ENCODE measurements at regions of chr1 and their contacts with region 1.

Region 1: DNA sequence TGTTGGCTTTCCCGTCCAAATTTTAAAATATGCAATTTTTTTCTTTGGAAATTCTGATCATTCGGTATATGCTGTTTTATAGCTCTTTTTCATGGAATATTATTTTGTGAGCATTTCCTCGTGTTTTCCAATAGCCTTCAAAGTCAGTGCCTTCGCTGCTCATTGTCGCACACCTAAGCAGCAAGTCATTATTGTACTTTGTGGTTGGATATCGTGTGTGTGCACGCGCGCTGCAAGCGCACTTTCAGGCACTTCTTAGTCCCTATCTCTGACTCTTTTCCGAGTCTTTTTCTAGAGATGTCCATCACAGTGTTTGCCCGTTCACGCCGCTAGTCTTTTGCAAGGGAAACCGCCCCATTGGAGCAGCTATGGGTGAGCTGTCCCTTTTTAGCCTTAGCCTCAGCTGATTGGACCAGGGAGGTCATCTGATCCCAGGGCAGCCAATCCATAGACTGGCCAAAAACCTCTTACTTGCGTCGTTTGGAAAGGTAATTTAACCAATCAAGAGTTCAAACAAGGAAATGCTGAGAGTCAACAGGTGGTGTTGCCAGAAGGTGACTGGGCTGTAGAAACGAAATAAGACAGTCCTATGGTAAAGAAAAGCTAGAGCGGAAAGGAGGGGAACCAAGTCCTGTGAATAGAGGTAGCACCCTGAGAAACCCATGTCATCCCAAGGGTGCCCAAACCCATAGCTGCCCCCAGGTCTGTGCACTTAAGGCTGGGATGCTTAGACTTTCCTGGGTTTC is 708 bp upstream of the HYI start:
- DNase-seq: peak; percentile 88 to 94
- H3K4me3 ChIP-seq: peak overlapping the region; percentile 59
- H3K4me3 Mint-ChIP-seq: peak overlapping the region; percentile 93
- H3K27ac Mint-ChIP-seq: peak overlapping the region; percentile 88
- H3K4me1 ChIP-seq: peaks cover 11% of the 10 kb centered on the region
- H3K4me1 Mint-ChIP-seq: peaks cover 9% of the 10 kb centered on the region
- H3K27me3 ChIP-seq: no peaks in the 10 kb centered on the region
- H3K27me3 Mint-ChIP-seq: no peaks in the 10 kb centered on the region
- CTCF ChIP-seq: no peak

Region 2: GRCh38 chr1:43402089-43402865 is 52.2 kb before region 1 on chr1:
- CTCF ChIA-PET with region 1: no interaction called
- POLR2A ChIA-PET with region 1: no interaction called
- intact Hi-C with region 1: no loop called
- DNase-seq: no peak
- H3K4me3 ChIP-seq: no peak overlapping the region
- H3K4me3 Mint-ChIP-seq: no peak overlapping the region
- H3K27ac Mint-ChIP-seq: no peak overlapping the region
- H3K4me1 ChIP-seq: no peaks in the 10 kb centered on the region
- H3K4me1 Mint-ChIP-seq: no peaks in the 10 kb centered on the region
- H3K27me3 ChIP-seq: no peaks in the 10 kb centered on the region
- H3K27me3 Mint-ChIP-seq: no peaks in the 10 kb centered on the region
- CTCF ChIP-seq: no peak

Region 3: DNA sequence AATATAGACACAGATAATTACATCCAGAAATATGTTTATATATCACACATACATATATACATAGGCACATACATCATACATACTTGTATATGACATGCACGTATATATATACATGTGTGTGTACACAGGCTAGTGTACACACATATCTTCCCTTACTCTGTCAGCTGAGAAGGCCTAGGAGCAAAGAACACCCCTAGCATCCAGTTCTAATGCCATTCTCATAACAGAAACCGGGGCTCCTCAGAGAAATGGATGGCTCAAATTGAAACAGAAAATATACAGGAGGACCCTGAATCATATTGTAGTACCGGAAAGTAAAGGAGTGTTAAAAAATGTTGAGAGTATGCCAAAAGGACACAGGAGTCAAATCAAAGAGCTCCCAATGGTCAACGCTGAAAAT is 19.0 kb after region 1 on chr1:
- CTCF ChIA-PET with region 1: no interaction called
- POLR2A ChIA-PET with region 1: no interaction called
- intact Hi-C with region 1: loop called (anchors 1 kb)
- DNase-seq: no peak
- H3K4me3 ChIP-seq: no peak overlapping the region
- H3K4me3 Mint-ChIP-seq: no peak overlapping the region
- H3K27ac Mint-ChIP-seq: no peak overlapping the region
- H3K4me1 ChIP-seq: peaks cover 53% of the 10 kb centered on the region
- H3K4me1 Mint-ChIP-seq: peaks cover 16% of the 10 kb centered on the region
- H3K27me3 ChIP-seq: no peaks in the 10 kb centered on the region
- H3K27me3 Mint-ChIP-seq: no peaks in the 10 kb centered on the region
- CTCF ChIP-seq: no peak

Region 4: GRCh38 chr1:43522776-43523480 is 68.5 kb after region 1 on chr1:
- CTCF ChIA-PET with region 1: no interaction called
- POLR2A ChIA-PET with region 1: no interaction called
- intact Hi-C with region 1: loop called (anchors 5 kb)
- DNase-seq: peak; percentile 71 to 85
- H3K4me3 ChIP-seq: no peak overlapping the region
- H3K4me3 Mint-ChIP-seq: peak overlapping the region; percentile 13
- H3K27ac Mint-ChIP-seq: peak overlapping the region; percentile 59
- H3K4me1 ChIP-seq: peaks cover 24% of the 10 kb centered on the region
- H3K4me1 Mint-ChIP-seq: peaks cover 34% of the 10 kb centered on the region
- H3K27me3 ChIP-seq: no peaks in the 10 kb centered on the region
- H3K27me3 Mint-ChIP-seq: no peaks in the 10 kb centered on the region
- CTCF ChIP-seq: no peak

Measured in Caco-2 (cell line).